Panc1 (cell line): ENCODE measurements at regions of chr2 and their contacts with region 1.

Region 1: GRCh38 chr2:70828914-70829824 is 6.4 kb downstream of the CD207 start:
- DNase-seq: no peak
- ATAC-seq: no peak
- H3K4me3 ChIP-seq: no peak overlapping the region
- H3K27ac ChIP-seq: no peak overlapping the region
- H3K4me1 ChIP-seq: no peaks in the 10 kb centered on the region
- H3K27me3 ChIP-seq: peaks cover 3% of the 10 kb centered on the region
- CTCF ChIP-seq: no peak

Region 2: GRCh38 chr2:69946351-69947077 is 882.7 kb before region 1 on chr2:
- CTCF ChIA-PET with region 1: no interaction called
- POLR2A ChIA-PET with region 1: no interaction called
- in situ Hi-C with region 1: no loop called
- intact Hi-C with region 1: no loop called
- DNase-seq: peak; percentile 83
- ATAC-seq: peak; percentile 88
- H3K4me3 ChIP-seq: peak overlapping the region in 1 of 2 experiments; percentile 31; a peak in 2 of 4 replicates
- H3K27ac ChIP-seq: peak overlapping the region; percentile 62
- H3K4me1 ChIP-seq: peaks cover 23% of the 10 kb centered on the region
- H3K27me3 ChIP-seq: no peaks in the 10 kb centered on the region
- CTCF ChIP-seq: no peak

Region 3: DNA sequence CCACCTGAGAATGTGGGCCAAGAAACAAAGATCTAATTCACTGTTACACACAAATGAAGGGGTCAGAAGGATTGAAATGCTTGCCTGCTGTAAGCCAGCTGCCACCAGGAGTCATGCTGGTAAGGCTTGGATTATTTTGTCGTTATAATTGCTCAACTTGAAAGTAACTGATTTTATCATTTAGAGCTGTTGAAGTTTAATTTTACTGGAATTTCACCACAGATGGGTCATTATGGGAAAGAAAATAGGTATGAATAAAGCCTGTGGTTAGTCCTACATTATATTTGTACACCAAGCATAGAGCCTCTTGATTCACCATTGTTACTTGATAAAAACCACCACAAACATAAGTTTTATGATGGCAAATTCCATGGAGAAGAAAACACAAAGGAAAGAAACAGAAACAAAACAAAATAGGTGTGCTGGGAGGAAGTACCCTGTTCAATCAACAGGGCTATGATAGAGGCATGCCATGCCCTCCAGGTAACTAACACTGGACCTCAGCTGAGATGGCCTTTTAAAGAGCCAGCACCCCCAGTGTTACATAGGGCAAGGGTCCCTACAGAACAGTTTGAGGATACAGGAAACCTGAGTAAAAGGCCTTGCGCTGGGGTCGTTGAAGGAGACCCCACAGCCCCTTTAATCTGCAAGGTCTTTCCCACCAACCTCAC is 11.8 kb before region 1 on chr2:
- CTCF ChIA-PET with region 1: no interaction called
- POLR2A ChIA-PET with region 1: no interaction called
- in situ Hi-C with region 1: no loop called
- intact Hi-C with region 1: no loop called
- DNase-seq: no peak
- ATAC-seq: no peak
- H3K4me3 ChIP-seq: no peak overlapping the region
- H3K27ac ChIP-seq: no peak overlapping the region
- H3K4me1 ChIP-seq: no peaks in the 10 kb centered on the region
- H3K27me3 ChIP-seq: peaks cover 30% of the 10 kb centered on the region
- CTCF ChIP-seq: no peak

Region 4: DNA sequence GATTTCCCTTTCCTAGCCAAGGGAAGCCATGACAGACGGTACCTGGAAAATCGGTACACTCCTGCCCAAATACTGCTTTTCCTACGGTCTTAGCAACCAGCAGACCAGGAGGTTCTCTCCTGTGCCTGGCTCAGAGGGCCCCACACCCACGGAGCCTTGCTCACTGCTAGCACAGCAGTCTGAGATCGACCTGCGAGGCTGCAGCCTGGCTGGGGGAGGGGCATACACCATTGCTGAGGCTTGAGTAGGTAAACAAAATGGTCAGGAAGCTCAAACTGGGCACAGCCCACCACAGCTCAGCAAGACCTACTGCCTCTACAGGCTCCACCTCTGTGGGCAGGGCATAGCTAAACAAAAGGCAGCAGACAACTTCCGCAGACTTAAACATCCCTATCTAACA is 13.2 kb after region 1 on chr2:
- CTCF ChIA-PET with region 1: no interaction called
- POLR2A ChIA-PET with region 1: interaction called, 14 read pairs
- in situ Hi-C with region 1: no loop called
- intact Hi-C with region 1: no loop called
- DNase-seq: no peak
- ATAC-seq: no peak
- H3K4me3 ChIP-seq: no peak overlapping the region
- H3K27ac ChIP-seq: no peak overlapping the region
- H3K4me1 ChIP-seq: no peaks in the 10 kb centered on the region
- H3K27me3 ChIP-seq: peaks cover 11% of the 10 kb centered on the region
- CTCF ChIP-seq: no peak